A549 (cell line): ENCODE measurements at regions of chr22 and their contacts with region 1.

Region 1: DNA sequence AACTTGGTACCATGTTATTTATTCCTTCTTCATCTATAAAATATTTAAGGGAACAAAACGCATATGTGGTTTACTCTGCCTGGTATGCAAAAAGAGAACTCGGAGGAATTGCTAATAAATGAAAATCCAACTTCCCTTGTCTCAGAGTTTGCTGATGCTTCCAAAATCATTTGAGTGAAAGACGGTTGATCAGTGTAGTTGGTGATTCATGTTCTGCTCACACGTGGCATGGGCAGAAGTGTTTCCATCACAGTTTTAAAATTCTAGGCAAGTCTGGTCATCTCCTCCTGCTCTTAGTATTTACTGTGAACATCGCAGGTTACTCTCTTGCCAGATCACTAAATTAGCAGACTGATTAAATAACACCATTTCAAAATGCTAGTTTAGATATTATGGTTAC is 11.9 kb upstream of the PARVB start:
- DNase-seq: no peak
- ATAC-seq: no peak
- H3K4me3 ChIP-seq: no peak overlapping the region
- H3K27ac ChIP-seq: no peak overlapping the region
- H3K4me1 ChIP-seq: no peaks in the 10 kb centered on the region
- CTCF ChIP-seq: no peak
- EP300 ChIP-seq: no peak
- POLR2A ChIP-seq: no peak
- RAD21 ChIP-seq: no peak

Region 2: DNA sequence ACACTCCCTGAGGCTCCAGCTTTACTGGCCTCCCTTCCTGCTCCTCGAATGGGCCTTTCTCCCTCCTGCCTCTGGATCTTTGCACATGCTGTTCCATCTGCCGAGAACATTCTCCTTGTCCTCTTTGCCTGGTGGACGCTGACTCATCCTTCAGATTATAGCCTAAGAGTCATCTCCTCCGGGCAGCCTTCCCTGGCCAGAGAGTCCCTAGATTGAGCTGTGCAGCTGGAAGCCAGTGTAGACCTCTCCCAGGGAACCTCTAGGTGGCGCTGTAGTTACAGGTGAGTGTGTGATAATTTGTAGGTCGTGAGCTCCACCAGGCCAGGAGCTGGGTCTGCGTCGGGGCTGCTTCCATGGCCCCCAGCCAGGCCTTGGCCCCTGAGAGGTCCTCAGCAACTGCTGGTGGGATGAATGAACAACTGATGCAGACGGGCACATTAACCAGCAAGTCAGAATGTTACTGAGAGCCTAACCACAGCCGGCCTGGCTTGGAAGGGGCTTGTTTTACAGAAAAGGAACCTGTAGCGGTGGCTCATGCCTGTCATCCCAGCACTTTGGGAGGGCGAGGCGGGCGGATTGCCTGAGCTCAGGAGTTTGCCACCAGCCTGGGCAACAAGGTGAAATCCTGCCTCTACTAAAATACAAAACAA is 129.0 kb before region 1 on chr22:
- CTCF ChIA-PET with region 1: no interaction called
- POLR2A ChIA-PET with region 1: no interaction called
- DNase-seq: peak; percentile 67 to 77
- ATAC-seq: peak; percentile 63 to 89; a peak in 5 of 6 replicates
- H3K4me3 ChIP-seq: no peak overlapping the region
- H3K27ac ChIP-seq: no peak overlapping the region
- H3K4me1 ChIP-seq: no peaks in the 10 kb centered on the region
- CTCF ChIP-seq: peak; percentile 49
- EP300 ChIP-seq: no peak
- POLR2A ChIP-seq: no peak
- RAD21 ChIP-seq: peak; percentile 46 to 56; a peak in 4 of 5 replicates

Region 3: DNA sequence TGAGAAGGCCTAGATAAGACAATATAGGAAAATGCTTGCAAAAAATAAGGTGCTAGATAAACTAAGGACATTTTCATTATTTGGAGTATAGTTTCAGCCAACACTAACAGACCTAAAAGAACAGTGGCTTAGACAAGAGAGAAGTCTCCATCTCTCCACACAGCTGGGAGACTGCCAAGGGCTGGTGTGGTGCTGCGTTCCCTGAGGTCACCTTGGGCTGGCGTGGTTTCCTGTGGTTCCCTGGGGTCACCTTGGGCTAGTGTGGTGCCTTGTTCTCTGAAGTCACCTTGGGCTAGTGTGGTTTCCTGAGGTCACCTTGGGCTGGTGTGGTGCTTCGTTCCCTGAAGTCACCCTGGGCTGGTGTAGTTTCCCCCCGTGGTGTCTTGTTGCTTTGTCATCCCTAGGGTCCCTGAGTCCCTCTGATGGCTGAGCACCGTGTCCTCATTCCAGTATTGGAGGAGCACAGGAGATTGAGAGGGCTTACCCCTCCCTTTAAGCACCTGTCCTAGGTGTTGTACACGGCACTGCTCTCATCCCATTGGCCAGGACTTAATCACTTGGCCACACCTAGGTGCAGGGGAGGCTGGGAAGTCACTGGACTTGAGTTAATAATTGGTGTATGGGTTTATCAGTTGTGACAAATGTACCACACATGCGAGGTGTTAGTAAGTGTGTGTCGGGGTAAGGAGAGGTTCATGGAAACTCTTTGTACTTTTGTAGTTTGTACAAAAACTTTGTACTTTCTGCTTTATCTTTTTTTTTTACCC is 42.0 kb before region 1 on chr22:
- CTCF ChIA-PET with region 1: no interaction called
- POLR2A ChIA-PET with region 1: no interaction called
- DNase-seq: no peak
- ATAC-seq: no peak
- H3K4me3 ChIP-seq: no peak overlapping the region
- H3K27ac ChIP-seq: no peak overlapping the region
- H3K4me1 ChIP-seq: no peaks in the 10 kb centered on the region
- CTCF ChIP-seq: no peak
- EP300 ChIP-seq: no peak
- POLR2A ChIP-seq: no peak
- RAD21 ChIP-seq: no peak

Region 4: GRCh38 chr22:44026630-44027511 is 14.7 kb after region 1 on chr22:
- CTCF ChIA-PET with region 1: no interaction called
- POLR2A ChIA-PET with region 1: no interaction called
- DNase-seq: no peak
- ATAC-seq: no peak
- H3K4me3 ChIP-seq: no peak overlapping the region
- H3K27ac ChIP-seq: no peak overlapping the region
- H3K4me1 ChIP-seq: peaks cover 31% of the 10 kb centered on the region
- CTCF ChIP-seq: no peak
- EP300 ChIP-seq: no peak
- POLR2A ChIP-seq: no peak
- RAD21 ChIP-seq: no peak

Region 5: GRCh38 chr22:44456661-44457412 is 444.7 kb after region 1 on chr22:
- CTCF ChIA-PET with region 1: no interaction called
- POLR2A ChIA-PET with region 1: interaction called, 12 read pairs
- DNase-seq: no peak
- ATAC-seq: no peak
- H3K4me3 ChIP-seq: no peak overlapping the region
- H3K27ac ChIP-seq: no peak overlapping the region
- H3K4me1 ChIP-seq: no peaks in the 10 kb centered on the region
- CTCF ChIP-seq: no peak
- EP300 ChIP-seq: no peak
- POLR2A ChIP-seq: no peak
- RAD21 ChIP-seq: no peak